Cardiac septum (tissue), 1 donor: ENCODE measurements at regions of chr6 and their contacts with region 1.

Region 1: GRCh38 chr6:133553652-133554051 is 312.5 kb downstream of the EYA4 start:
- DNase-seq: no peak

Region 2: DNA sequence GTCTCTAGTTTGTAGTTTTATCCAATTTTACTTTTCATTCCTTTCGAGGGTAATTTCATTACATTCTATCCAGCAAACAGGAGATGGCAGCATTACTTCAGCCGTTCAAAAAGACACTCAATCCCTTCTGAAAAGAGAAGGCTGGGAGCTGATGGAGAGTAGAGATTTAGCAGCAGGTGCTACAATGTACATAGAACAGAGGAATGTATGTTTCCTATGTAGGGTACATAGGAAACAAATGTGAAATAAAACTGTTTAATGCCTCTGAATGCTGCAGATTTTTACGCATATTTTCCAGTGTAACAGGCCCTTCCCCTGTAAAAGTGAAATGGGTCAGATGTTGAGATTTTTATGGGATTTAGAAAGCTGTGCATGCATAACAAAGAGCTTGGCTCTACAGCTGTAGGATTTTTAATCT is 723.3 kb before region 1 on chr6:
- intact Hi-C with region 1: loop called (anchors 5 kb)
- DNase-seq: no peak

Region 3: GRCh38 chr6:132962936-132963868 is 590.5 kb before region 1 on chr6:
- intact Hi-C with region 1: loop called (anchors 5 kb)
- DNase-seq: no peak

Region 4: DNA sequence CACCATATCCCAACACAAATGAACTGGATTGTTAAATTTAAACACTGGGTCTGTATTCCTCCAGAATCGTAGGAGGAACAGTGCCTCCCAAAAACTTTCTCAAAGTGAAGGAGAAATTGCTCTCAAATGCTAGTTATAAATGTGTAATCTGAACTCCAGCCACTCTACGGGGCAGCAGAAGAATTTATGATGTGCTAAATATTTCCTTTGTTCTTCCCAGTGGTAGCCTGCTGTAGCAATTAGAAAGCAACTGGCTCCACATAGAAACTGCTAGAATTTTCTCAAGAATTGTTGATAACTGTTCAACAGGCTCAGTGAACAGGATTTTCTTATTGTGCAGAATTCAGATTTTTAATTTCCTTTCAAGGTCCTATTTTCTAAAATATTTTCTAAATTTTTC is 362.3 kb before region 1 on chr6:
- intact Hi-C with region 1: loop called (anchors 5 kb)
- DNase-seq: no peak